ENCODE measurements at regions of chr6 and their contacts with region 1.

Region 1: DNA sequence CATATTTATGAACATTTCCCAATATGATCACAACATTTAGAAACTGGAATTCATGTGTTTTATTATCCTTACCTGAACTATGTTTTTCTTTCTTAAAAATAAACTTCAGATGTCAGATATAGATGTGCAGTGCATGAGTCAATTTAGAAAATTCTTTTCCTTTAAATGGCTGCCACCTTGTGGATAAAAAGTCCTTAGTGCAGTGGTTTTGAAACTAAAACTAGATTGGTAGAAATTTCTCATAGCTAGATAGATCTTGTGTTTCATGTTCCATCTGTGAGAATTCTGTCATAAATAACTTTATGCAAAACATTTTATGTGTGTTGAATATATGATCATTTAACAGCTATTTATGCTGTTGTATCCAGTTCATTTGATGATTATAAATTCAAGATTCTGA is 134.9 kb downstream of the KLHL32 start:
- DNase-seq: no peak
- H3K4me3 Mint-ChIP-seq: no peak overlapping the region
- H3K27ac Mint-ChIP-seq: no peak overlapping the region
- H3K4me1 Mint-ChIP-seq: no peaks in the 10 kb centered on the region
- H3K27me3 Mint-ChIP-seq: peaks cover 3% of the 10 kb centered on the region

Region 2: GRCh38 chr6:96542702-96543101 is 516.8 kb before region 1 on chr6:
- intact Hi-C with region 1: loop called (anchors 2 kb)
- DNase-seq: no peak
- H3K4me3 Mint-ChIP-seq: no peak overlapping the region
- H3K27ac Mint-ChIP-seq: no peak overlapping the region
- H3K4me1 Mint-ChIP-seq: no peaks in the 10 kb centered on the region
- H3K27me3 Mint-ChIP-seq: no peaks in the 10 kb centered on the region

Region 3: DNA sequence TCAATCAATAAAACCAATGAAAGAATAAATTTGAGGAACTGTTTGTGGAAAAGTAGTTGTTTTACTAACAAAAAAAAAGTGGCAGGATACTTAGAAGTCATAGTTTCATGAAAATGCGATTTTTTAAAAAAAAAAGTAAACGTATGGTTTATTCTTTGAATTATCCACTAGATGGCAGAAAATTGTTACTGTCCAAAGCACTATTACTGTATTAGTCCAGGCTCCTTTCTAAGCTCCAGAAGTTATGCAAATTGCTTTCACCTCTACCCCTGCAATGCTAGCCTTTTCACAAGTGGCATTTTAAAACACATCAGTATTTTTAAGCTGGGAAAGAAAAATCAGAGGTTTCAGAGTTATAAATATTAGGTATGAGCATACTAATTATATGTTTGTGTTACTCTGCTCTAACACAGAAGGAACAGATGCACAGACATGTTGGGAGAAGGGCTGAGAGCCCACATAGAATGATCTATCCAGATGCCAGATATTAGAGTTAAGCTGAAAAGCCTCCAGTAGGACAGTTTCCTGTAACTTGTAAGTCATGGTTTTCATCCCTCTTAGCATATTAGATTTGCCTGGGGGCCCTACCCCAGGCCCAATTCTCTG is 432.6 kb before region 1 on chr6:
- intact Hi-C with region 1: loop called (anchors 1 kb)
- DNase-seq: no peak
- H3K4me3 Mint-ChIP-seq: no peak overlapping the region
- H3K27ac Mint-ChIP-seq: no peak overlapping the region
- H3K4me1 Mint-ChIP-seq: peaks cover 5% of the 10 kb centered on the region
- H3K27me3 Mint-ChIP-seq: peaks cover 11% of the 10 kb centered on the region

Region 4: GRCh38 chr6:96923871-96924493 is 135.5 kb before region 1 on chr6:
- intact Hi-C with region 1: no loop called
- DNase-seq: no peak
- H3K4me3 Mint-ChIP-seq: peak overlapping the region; percentile 87
- H3K27ac Mint-ChIP-seq: peak overlapping the region; percentile 85
- H3K4me1 Mint-ChIP-seq: peaks cover 33% of the 10 kb centered on the region
- H3K27me3 Mint-ChIP-seq: peaks cover 2% of the 10 kb centered on the region